Heart left ventricle (tissue), 16 donors: ENCODE measurements at regions of chr10 and their contacts with region 1.

Region 1: DNA sequence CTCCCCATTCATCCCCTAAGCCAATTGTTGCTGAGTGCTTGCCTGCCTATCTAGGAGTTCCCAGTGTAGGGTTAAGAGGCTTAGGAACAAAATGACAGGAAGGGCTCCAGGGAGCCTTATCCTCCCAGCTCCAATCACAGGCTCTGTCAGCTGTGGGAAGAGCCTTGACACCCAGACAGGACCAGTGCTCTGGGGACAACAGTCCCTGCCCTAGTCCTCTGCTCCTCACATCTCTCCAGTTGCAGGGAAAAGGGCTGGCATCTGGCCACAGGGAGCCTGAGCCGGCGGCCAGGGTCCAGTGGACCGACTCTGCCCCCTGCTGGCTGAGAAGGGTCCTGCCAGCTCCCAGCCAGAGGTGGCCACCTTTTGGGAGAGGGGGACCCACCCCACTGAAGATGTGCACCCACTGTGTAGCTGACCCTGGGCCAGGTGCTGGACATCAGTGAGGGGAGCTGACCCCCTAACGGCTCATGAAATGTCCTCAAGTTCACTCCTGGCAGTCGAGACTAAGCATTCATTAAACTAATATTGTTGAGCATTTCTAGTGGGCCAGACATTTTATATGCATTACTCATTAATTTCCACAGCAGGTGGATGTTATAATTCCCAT is 17.6 kb downstream of the DNAJB12 start:
- DNase-seq: peak; percentile 87 to 94 (median 92)
- ATAC-seq: peak; percentile 16 to 44 (median 39)
- H3K4me3 ChIP-seq: no peak overlapping the region
- H3K27ac ChIP-seq: peak overlapping the region; percentile 82 to 98 (median 92)
- H3K4me1 ChIP-seq: peaks cover 8 to 63% (median 53%) of the 10 kb centered on the region in 12 donors
- H3K27me3 ChIP-seq: no peaks in the 10 kb centered on the region
- CTCF ChIP-seq: peak; percentile 93 to 99 (median 98)
- POLR2A ChIP-seq: no peak

Region 2: DNA sequence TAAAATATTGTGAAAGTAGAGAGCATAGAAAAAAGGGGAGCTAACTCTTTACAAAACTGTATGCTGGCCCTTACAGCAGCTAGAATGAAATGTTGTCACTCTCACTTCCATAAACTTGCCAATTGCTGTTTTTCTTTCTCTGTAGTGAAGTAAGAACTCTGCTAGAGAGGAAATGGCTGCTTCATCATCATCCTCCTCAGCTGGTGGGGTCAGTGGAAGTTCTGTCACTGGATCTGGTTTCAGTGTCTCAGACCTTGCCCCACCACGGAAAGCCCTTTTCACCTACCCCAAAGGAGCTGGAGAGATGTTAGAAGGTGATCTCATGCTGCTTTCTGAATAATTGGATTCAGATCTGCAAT is 113.4 kb before region 1 on chr10:
- intact Hi-C with region 1: loop called in 2 of 10 experiments (anchors 2 to 5 kb)
- DNase-seq: no peak
- ATAC-seq: peak; percentile 13 to 61 (median 32)
- H3K4me3 ChIP-seq: no peak overlapping the region
- H3K27ac ChIP-seq: peak overlapping the region in 11 of 12 donors; percentile 14 to 78 (median 58)
- H3K4me1 ChIP-seq: peaks cover 0 to 57% (median 21%) of the 10 kb centered on the region in 12 donors
- H3K27me3 ChIP-seq: no peaks in the 10 kb centered on the region
- CTCF ChIP-seq: no peak
- POLR2A ChIP-seq: no peak

Region 3: DNA sequence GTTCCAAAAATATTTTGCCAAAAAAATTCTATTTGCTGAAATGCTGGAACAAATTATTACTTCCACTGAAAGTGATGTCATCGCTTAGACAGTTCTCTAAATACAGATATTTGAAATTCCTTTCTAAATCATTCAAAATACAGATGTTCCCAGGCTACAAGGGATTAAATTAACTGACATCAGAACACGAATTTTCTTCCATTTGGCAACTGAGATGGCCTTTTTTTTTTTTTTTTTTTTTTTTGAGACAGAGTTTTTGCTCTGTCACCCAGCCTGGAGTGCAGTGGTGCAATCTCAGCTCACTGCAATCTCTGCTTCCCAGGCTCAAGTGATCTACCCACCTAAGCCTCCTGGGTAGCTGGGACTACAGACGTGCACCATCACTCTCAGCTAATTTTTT is 702.5 kb after region 1 on chr10:
- intact Hi-C with region 1: no loop called
- DNase-seq: no peak
- ATAC-seq: peak; percentile 42 to 78 (median 66)
- H3K4me3 ChIP-seq: no peak overlapping the region
- H3K27ac ChIP-seq: peak overlapping the region in 5 of 12 donors; percentile 18 to 56 (median 39)
- H3K4me1 ChIP-seq: peaks cover 0 to 17% (median 1%) of the 10 kb centered on the region in 12 donors
- H3K27me3 ChIP-seq: no peaks in the 10 kb centered on the region
- CTCF ChIP-seq: no peak
- POLR2A ChIP-seq: no peak